ENCODE measurements at regions of chr16 and their contacts with region 1.

Region 1: GRCh38 chr16:15822957-15823356 is 33.9 kb downstream of the MYH11 start:
- DNase-seq: no peak
- ATAC-seq: peak; percentile 57
- H3K4me3 ChIP-seq: no peak overlapping the region
- H3K27ac ChIP-seq: no peak overlapping the region
- H3K4me1 ChIP-seq: no peaks in the 10 kb centered on the region
- H3K27me3 ChIP-seq: peaks cover 10 to 49% of the 10 kb centered on the region in 2 experiments
- CTCF ChIP-seq: no peak
- EP300 ChIP-seq: no peak
- POLR2A ChIP-seq: no peak
- RAD21 ChIP-seq: no peak

Region 2: GRCh38 chr16:15765880-15766279 is 57.1 kb before region 1 on chr16:
- CTCF ChIA-PET with region 1: interaction called, 30 read pairs
- POLR2A ChIA-PET with region 1: no interaction called
- in situ Hi-C with region 1: no loop called
- intact Hi-C with region 1: loop called (anchors 1 kb)
- DNase-seq: peak; percentile 73
- ATAC-seq: peak; percentile 96
- H3K4me3 ChIP-seq: no peak overlapping the region
- H3K27ac ChIP-seq: no peak overlapping the region
- H3K4me1 ChIP-seq: no peaks in the 10 kb centered on the region
- H3K27me3 ChIP-seq: peaks cover 0 to 10% of the 10 kb centered on the region in 2 experiments; a peak in 4 of 5 replicates
- CTCF ChIP-seq: peak; percentile 90
- EP300 ChIP-seq: no peak
- POLR2A ChIP-seq: no peak
- RAD21 ChIP-seq: peak; percentile 86

Region 3: GRCh38 chr16:15777533-15778203 is 45.3 kb before region 1 on chr16:
- CTCF ChIA-PET with region 1: interaction called, 21 read pairs
- POLR2A ChIA-PET with region 1: no interaction called
- in situ Hi-C with region 1: loop called (anchors 5 kb)
- intact Hi-C with region 1: loop called (anchors 1 kb)
- DNase-seq: peak; percentile 85
- ATAC-seq: peak; percentile 97
- H3K4me3 ChIP-seq: no peak overlapping the region
- H3K27ac ChIP-seq: no peak overlapping the region
- H3K4me1 ChIP-seq: peaks cover 11% of the 10 kb centered on the region; the same call in 1 of the 2 replicates
- H3K27me3 ChIP-seq: peaks cover 0 to 21% of the 10 kb centered on the region in 2 experiments; a peak in 3 of 5 replicates
- CTCF ChIP-seq: peak; percentile 91
- EP300 ChIP-seq: no peak
- POLR2A ChIP-seq: no peak
- RAD21 ChIP-seq: peak; percentile 91